ENCODE measurements at regions of chr18 and their contacts with region 1.

Region 1: GRCh38 chr18:77067291-77068061 is 65.1 kb downstream of the MBP start:
- DNase-seq: peak; percentile 91
- ATAC-seq: peak; percentile 67
- H3K4me3 Mint-ChIP-seq: peak overlapping the region; percentile 60
- H3K27ac Mint-ChIP-seq: peak overlapping the region; percentile 100
- H3K4me1 Mint-ChIP-seq: peaks cover 100% of the 10 kb centered on the region
- H3K27me3 Mint-ChIP-seq: no peaks in the 10 kb centered on the region

Region 2: GRCh38 chr18:77054606-77055428 is 12.7 kb before region 1 on chr18:
- CTCF ChIA-PET with region 1: interaction called, 40 read pairs
- DNase-seq: peak; percentile 95
- ATAC-seq: peak; percentile 88
- H3K4me3 Mint-ChIP-seq: peak overlapping the region; percentile 72
- H3K27ac Mint-ChIP-seq: peak overlapping the region; percentile 91
- H3K4me1 Mint-ChIP-seq: peaks cover 64% of the 10 kb centered on the region
- H3K27me3 Mint-ChIP-seq: no peaks in the 10 kb centered on the region

Region 3: GRCh38 chr18:77101410-77102258 is 34.2 kb after region 1 on chr18:
- CTCF ChIA-PET with region 1: interaction called, 19 read pairs
- DNase-seq: peak; percentile 74
- ATAC-seq: peak; percentile 45
- H3K4me3 Mint-ChIP-seq: peak overlapping the region; percentile 70
- H3K27ac Mint-ChIP-seq: peak overlapping the region; percentile 98
- H3K4me1 Mint-ChIP-seq: peaks cover 95% of the 10 kb centered on the region
- H3K27me3 Mint-ChIP-seq: no peaks in the 10 kb centered on the region

Region 4: DNA sequence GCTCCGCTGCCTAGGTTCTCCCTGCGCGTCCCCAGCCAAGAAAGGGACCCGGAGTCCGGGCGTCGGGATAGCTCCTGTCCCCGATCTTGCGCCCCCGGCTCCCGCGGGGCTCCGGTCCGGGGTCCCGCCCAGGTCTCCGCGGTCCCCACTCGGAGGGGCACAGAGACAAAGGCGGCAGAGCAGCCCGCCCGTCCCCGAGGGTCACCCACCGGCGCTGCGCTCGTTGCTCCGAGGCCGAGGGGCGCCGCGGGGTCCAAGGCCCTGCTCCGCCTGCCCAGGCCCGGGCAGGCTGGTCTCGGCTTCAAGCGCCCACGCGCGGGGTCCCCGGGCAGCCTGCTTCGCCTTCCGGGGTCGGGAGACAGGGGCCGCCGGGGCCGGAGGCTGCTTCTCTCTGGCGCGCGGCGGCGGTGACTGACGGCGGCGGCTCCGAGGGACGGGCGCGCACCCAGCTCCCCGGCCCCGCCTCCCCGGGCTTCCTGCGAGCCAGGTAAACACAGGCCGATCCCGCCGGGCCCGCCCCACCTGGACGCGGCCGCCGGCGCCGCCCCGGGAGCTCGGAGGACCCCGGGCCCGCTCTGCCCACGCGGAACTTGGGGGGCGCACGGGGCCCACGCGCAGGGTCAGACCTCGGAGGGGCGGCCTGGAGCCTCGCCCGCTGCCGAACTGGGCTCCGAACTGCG is 65.0 kb after region 1 on chr18 and contains the start of gene MBP:
- CTCF ChIA-PET with region 1: interaction called, 12 read pairs
- DNase-seq: peak; percentile 80
- ATAC-seq: peak; percentile 70
- H3K4me3 Mint-ChIP-seq: peak within 1 kb of the TSS; percentile 92
- H3K27ac Mint-ChIP-seq: peak within 1 kb of the TSS; percentile 95
- H3K4me1 Mint-ChIP-seq: peaks cover 68% of the 10 kb centered on the region
- H3K27me3 Mint-ChIP-seq: no peaks in the 10 kb centered on the region
- total RNA-seq, gene MBP: 94.7 to 101 TPM

Region 5: GRCh38 chr18:77461062-77461688 is 393.7 kb after region 1 on chr18:
- CTCF ChIA-PET with region 1: no interaction called
- DNase-seq: no peak
- ATAC-seq: no peak
- H3K4me3 Mint-ChIP-seq: no peak overlapping the region
- H3K27ac Mint-ChIP-seq: no peak overlapping the region
- H3K4me1 Mint-ChIP-seq: no peaks in the 10 kb centered on the region
- H3K27me3 Mint-ChIP-seq: peaks cover 25% of the 10 kb centered on the region